ENCODE measurements at regions of chr10 and their contacts with region 1.

Region 1: DNA sequence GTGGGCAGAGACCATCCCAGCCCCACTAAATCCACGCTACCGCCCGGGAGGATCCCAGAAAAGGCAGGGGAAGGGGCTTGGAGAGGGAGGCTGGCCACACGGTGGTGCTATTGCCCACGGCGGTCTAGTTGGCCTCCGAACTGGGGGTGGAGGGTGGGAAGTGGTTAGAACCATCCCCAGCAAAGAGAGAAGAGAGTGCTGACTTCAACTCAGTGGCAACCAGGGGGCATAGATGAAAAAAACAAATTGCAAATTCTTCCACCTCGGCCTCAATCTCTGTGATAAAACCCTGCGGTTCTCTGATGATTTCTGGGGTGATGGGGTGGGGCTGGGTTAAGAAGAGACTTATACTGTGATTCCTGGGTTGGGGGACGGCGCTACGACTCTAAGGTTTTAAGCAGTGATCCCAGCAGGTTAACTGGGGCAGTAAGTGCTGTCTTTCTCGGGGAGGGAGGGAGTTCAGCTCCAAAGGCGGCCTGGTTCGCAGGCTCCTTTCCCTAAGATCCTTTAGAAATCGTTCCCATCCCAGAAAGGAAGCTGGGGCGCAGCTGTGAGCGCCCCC is 154.5 kb upstream of the LYZL2 start:
- DNase-seq: peak; percentile 86 to 94
- ATAC-seq: peak; percentile 80 to 90 (median 88)
- H3K4me3 ChIP-seq: peak overlapping the region; percentile 91
- H3K27ac ChIP-seq: peak overlapping the region; percentile 92
- H3K4me1 ChIP-seq: peaks cover 20% of the 10 kb centered on the region
- H3K27me3 ChIP-seq: no peaks in the 10 kb centered on the region
- CTCF ChIP-seq: peak; percentile 80

Region 2: DNA sequence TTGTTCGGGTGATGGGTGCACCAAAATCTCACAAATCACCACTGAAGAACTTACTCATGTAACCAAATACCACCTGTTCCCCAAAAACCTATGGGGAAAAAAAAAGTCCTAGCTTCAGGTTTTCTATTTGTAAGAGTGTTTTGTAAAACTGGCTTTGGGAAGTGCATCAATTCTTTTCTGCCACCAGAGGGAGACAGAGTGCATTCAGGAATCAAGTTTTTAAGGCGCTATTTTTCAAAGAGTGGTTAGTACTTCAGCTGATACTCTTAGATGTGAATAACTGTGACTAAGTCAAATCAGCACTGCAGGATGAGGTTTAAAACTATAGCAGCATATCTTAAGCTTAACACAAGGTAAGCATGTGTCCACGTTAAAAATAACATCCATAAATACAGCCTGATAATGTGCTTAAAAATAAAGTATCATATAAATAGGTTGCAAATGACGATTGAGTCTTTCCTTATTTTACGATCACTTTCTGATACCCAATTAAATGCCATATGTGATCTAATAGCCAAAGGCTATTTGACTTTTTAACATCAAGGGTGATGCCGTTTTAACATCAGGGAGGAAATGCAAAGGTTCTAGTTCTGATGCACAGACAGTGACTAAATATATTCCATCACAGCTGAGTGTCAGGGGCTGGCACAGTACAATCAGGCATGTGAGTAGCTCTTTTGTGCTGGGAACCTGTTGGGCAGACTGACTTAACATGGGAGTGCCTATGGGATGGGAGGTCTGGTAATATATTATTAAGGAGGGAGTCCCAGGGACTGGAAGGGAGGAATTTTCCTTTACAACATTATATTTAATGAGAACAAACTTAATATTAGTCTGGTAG is 143.9 kb before region 1 on chr10:
- intact Hi-C with region 1: no loop called
- DNase-seq: no peak
- ATAC-seq: no peak
- H3K4me3 ChIP-seq: no peak overlapping the region
- H3K27ac ChIP-seq: no peak overlapping the region
- H3K4me1 ChIP-seq: peaks cover 10% of the 10 kb centered on the region
- H3K27me3 ChIP-seq: peaks cover 0 to 3% (median 0%) of the 10 kb centered on the region in 3 donors
- CTCF ChIP-seq: peak; percentile 85

Region 3: DNA sequence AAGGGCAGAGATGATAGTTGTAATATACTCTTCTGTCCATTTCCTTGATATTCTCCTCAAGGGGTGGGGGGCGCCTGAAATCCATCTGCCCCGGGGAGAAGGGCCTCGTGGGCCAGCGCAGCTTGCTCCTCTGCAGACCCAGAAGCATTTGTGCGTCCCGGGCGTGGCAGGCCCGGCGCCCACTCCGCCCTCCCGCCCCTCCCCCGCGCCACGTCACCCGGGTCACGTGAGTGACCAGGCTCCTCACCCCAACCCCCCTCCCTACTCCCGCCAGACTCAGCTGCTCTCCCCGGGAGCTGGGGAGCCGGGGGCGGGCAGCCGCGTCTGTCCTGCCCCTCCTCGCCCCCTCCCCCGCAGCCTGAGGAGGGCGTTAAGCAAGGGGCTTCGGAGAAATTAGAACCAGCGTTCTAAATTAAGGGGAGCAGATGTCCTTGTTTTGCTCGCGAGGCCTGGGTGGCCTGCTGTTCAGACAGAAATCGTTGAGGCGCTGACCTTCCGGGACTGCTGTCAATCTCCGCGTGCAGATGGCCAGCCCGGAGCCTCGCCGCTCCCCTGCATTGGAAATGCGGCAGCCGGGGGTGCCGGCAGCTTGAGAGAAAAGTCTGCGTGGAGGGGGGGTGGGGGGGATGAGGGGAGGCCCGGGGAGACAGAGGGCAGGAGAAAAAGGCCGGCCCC is 349.7 kb after region 1 on chr10:
- intact Hi-C with region 1: loop called in 1 of 2 experiments (anchors 10 kb)
- DNase-seq: peak; percentile 83 to 92
- ATAC-seq: peak; percentile 93 to 96 (median 94)
- H3K4me3 ChIP-seq: peak overlapping the region; percentile 70
- H3K27ac ChIP-seq: peak overlapping the region; percentile 95
- H3K4me1 ChIP-seq: peaks cover 10% of the 10 kb centered on the region
- H3K27me3 ChIP-seq: no peaks in the 10 kb centered on the region
- CTCF ChIP-seq: no peak

Region 4: GRCh38 chr10:31479752-31480151 is 695.7 kb after region 1 on chr10:
- intact Hi-C with region 1: loop called in 1 of 2 experiments (anchors 10 kb)
- DNase-seq: no peak
- ATAC-seq: no peak
- H3K4me3 ChIP-seq: no peak overlapping the region
- H3K27ac ChIP-seq: no peak overlapping the region
- H3K4me1 ChIP-seq: no peaks in the 10 kb centered on the region
- H3K27me3 ChIP-seq: no peaks in the 10 kb centered on the region
- CTCF ChIP-seq: no peak

Region 5: DNA sequence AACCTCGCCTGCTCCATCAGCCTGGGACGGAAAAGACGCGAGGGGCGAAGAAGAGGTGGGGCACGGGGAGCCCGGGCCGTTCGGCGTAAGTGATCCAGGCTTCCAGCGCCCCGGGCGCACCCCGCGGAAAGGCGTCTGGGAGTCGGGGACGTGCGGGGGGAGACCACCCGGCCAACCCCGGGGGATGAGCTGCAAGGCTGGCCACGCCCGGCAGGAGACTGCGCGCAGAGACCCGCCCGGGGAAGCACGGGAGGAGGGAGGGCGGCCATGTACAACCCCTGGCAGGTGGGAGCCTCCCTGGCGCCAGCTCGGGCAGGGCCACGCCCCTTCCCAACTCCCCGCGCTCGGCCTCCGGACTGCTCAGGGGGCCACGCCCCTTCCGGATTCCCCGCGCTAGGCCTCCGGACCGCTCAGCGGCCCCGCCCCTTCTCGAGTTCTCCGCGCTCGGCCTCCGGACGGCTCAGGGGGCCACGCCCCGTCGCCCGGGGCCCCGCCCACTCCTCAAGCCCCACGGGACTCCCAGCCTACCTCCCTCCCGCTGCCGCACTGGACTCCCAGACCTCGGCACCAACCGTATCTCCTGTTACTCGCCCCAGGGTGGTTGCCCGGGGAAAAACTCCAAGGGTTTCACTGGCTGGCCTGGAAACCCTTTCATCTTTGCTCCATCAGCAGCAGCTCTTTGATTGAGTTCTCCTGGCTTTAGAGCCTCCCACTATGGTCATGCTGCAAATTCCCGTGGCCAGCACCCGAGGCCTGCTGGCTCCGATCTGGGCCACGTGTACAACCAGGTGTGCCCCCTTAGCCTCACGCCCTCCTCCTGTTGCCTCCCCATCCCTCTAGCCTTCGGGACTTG is 819.4 kb after region 1 on chr10:
- intact Hi-C with region 1: loop called in 1 of 2 experiments (anchors 10 kb)
- DNase-seq: peak; percentile 97 to 98
- ATAC-seq: peak; percentile 90 to 95 (median 92)
- H3K4me3 ChIP-seq: peak overlapping the region; percentile 83
- H3K27ac ChIP-seq: peak overlapping the region; percentile 97
- H3K4me1 ChIP-seq: peaks cover 7% of the 10 kb centered on the region
- H3K27me3 ChIP-seq: no peaks in the 10 kb centered on the region
- CTCF ChIP-seq: no peak

Region 6: GRCh38 chr10:31808258-31809218 is 1024.5 kb after region 1 on chr10:
- intact Hi-C with region 1: loop called in 1 of 2 experiments (anchors 10 kb)
- DNase-seq: peak; percentile 23 to 61
- ATAC-seq: peak; percentile 86 to 93 (median 92)
- H3K4me3 ChIP-seq: peak overlapping the region; percentile 62
- H3K27ac ChIP-seq: peak overlapping the region; percentile 76
- H3K4me1 ChIP-seq: no peaks in the 10 kb centered on the region
- H3K27me3 ChIP-seq: no peaks in the 10 kb centered on the region
- CTCF ChIP-seq: peak; percentile 70